ENCODE measurements at regions of chr22 and their contacts with region 1.

Region 1: DNA sequence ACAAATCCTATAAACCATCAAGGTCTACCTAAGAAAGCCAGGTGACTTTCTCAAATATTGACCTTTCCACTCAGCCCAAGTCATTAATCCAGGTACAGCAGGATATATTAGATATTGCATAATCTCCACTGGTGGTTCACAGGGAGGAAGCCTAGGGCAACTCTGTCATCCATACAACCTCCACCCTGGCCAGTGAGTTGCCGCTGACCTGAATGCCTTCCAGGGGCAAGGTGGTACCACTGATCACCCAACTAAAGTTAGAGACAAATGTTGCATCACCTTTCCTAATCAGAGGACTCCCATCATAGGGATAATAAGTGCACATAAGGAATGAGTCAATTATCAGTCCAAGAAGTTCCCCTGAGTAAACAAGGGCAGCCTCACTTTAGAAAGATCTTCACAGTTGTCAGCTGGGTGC is 22.8 kb downstream of the GUCD1 start:
- DNase-seq: no peak
- H3K4me3 ChIP-seq: no peak overlapping the region
- CTCF ChIP-seq: no peak

Region 2: DNA sequence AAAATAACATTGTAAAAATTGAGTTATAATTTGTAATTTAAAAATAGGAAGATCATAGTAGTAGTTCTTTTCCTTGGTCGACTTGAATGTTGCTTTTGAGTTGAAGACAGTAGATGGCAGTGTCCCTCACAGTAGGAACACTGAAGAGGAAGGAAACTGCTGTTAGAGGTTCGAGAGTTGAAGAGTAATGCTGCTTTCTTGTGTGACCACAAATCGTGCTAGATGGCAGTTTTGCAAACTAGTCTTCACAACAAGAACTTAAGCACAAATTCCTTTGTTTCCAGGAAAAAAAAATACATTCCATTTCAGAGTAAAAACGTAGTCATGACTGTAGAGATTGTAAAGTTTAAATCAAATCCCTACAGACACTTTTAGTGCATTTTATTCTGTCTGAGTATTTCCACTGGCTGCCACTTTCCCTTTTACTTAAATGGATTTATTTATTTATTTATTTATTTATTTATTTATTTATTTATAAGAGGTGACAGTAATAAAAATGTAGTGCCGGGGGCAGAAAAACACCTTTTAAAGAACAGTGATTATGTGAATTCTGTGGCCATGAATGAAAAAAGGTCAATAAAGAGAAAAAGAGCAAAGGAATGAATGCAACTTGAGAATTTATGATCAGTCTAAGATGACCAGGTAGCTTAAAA is 206.9 kb before region 1 on chr22:
- CTCF ChIA-PET with region 1: interaction called, 122 read pairs
- POLR2A ChIA-PET with region 1: no interaction called
- DNase-seq: peak; percentile 99
- H3K4me3 ChIP-seq: no peak overlapping the region
- CTCF ChIP-seq: peak; percentile 59

Region 3: GRCh38 chr22:24379536-24379935 is 152.6 kb before region 1 on chr22:
- CTCF ChIA-PET with region 1: no interaction called
- POLR2A ChIA-PET with region 1: no interaction called
- DNase-seq: no peak
- H3K4me3 ChIP-seq: no peak overlapping the region
- CTCF ChIP-seq: no peak